CD8-positive, alpha-beta memory T cell (primary cell): ENCODE measurements at regions of chr17 and their contacts with region 1.

Region 1: GRCh38 chr17:16589097-16589969 is 20.3 kb upstream of the ZNF287 start:
- DNase-seq: peak; percentile 87 to 94 (median 89)
- H3K4me3 ChIP-seq: peak overlapping the region; percentile 77
- H3K4me3 Mint-ChIP-seq: peak overlapping the region; percentile 75 to 85 (median 80)
- H3K27ac ChIP-seq: no peak overlapping the region
- H3K27ac Mint-ChIP-seq: peak overlapping the region in 5 of 8 donors; percentile 40 to 60 (median 55)
- H3K4me1 ChIP-seq: peaks cover 4% of the 10 kb centered on the region
- H3K4me1 Mint-ChIP-seq: peaks cover 5 to 10% (median 8%) of the 10 kb centered on the region in 3 donors
- H3K27me3 ChIP-seq: no peaks in the 10 kb centered on the region
- H3K27me3 Mint-ChIP-seq: peaks cover 6 to 42% of the 10 kb centered on the region in 2 donors

Region 2: DNA sequence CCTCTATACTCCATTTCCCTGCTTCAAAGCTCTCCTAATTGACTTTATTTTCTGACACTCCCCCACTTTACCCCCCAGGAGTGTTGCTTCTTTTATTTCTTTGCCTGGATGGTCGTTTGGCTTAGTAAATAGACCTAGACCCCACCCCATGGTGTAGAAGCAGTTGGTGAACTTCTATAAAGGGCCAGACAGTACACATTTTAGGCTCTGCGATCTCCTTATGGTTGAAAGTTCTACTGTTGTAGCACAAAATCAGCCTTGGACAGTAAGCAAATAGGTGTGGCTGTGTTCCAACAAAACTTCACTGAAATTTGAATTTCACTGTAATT is 52.2 kb before region 1 on chr17:
- CTCF ChIA-PET with region 1: interaction called, 75 read pairs
- POLR2A ChIA-PET with region 1: interaction called, 7 read pairs
- DNase-seq: no peak
- H3K4me3 ChIP-seq: peak overlapping the region; percentile 86
- H3K4me3 Mint-ChIP-seq: peak overlapping the region; percentile 94 to 99 (median 98)
- H3K27ac ChIP-seq: no peak overlapping the region
- H3K27ac Mint-ChIP-seq: peak overlapping the region in 7 of 8 donors; percentile 15 to 98 (median 80)
- H3K4me1 ChIP-seq: peaks cover 18% of the 10 kb centered on the region
- H3K4me1 Mint-ChIP-seq: peaks cover 17 to 31% (median 19%) of the 10 kb centered on the region in 3 donors
- H3K27me3 ChIP-seq: no peaks in the 10 kb centered on the region
- H3K27me3 Mint-ChIP-seq: peaks cover 0 to 6% of the 10 kb centered on the region in 2 donors

Region 3: GRCh38 chr17:16568541-16569357 is 20.6 kb before region 1 on chr17 and contains the start of gene ZNF287:
- CTCF ChIA-PET with region 1: interaction called, 14 read pairs
- POLR2A ChIA-PET with region 1: no interaction called
- DNase-seq: peak; percentile 85 to 96 (median 91)
- H3K4me3 ChIP-seq: peak within 1 kb of the TSS; percentile 72
- H3K4me3 Mint-ChIP-seq: peak within 1 kb of the TSS; percentile 83 to 93 (median 86)
- H3K27ac ChIP-seq: peak within 1 kb of the TSS; percentile 26
- H3K27ac Mint-ChIP-seq: peak within 1 kb of the TSS; percentile 57 to 97 (median 92)
- H3K4me1 ChIP-seq: peaks cover 7% of the 10 kb centered on the region
- H3K4me1 Mint-ChIP-seq: peaks cover 17 to 28% (median 27%) of the 10 kb centered on the region in 3 donors
- H3K27me3 ChIP-seq: no peaks in the 10 kb centered on the region
- H3K27me3 Mint-ChIP-seq: peaks cover 5 to 10% of the 10 kb centered on the region in 2 donors
- total RNA-seq, gene ZNF287: 8.9 to 9.2 TPM

Region 4: GRCh38 chr17:16639438-16639837 is 50.1 kb after region 1 on chr17:
- CTCF ChIA-PET with region 1: no interaction called
- POLR2A ChIA-PET with region 1: no interaction called
- DNase-seq: no peak
- H3K4me3 ChIP-seq: no peak overlapping the region
- H3K4me3 Mint-ChIP-seq: no peak overlapping the region
- H3K27ac ChIP-seq: no peak overlapping the region
- H3K27ac Mint-ChIP-seq: no peak overlapping the region
- H3K4me1 ChIP-seq: no peaks in the 10 kb centered on the region
- H3K4me1 Mint-ChIP-seq: peaks cover 1 to 13% (median 4%) of the 10 kb centered on the region in 3 donors
- H3K27me3 ChIP-seq: no peaks in the 10 kb centered on the region
- H3K27me3 Mint-ChIP-seq: no peaks in the 10 kb centered on the region